ENCODE measurements at regions of chr1 and their contacts with region 1.

Region 1: DNA sequence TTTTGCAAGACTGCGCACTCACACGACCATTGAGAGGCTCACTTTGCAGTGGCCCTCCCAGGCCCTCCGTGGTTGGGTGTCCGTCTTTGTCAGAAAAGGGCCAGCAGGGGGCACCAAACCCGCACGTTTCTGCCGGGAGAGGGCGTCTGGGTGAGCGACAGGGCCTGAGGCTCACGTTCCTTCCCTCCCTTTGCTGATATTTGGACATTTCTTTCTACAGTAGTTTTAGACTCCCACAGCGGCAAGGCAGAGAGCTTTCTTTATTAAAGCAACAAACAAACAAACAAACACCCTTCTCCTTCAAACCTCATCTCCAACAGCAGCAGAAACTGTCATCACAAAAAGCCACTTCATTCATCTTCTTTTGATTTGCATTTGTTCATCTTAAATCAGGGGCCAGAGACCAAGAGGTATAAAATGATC is 79.2 kb upstream of the WDR26 start:
- H3K4me3 ChIP-seq: no peak overlapping the region
- H3K27ac ChIP-seq: no peak overlapping the region
- H3K4me1 ChIP-seq: 0 out of 2 replicates have a peak, but pooled peaks cover 3% of the 10 kb centered on the region
- CTCF ChIP-seq: peak; percentile 100

Region 2: DNA sequence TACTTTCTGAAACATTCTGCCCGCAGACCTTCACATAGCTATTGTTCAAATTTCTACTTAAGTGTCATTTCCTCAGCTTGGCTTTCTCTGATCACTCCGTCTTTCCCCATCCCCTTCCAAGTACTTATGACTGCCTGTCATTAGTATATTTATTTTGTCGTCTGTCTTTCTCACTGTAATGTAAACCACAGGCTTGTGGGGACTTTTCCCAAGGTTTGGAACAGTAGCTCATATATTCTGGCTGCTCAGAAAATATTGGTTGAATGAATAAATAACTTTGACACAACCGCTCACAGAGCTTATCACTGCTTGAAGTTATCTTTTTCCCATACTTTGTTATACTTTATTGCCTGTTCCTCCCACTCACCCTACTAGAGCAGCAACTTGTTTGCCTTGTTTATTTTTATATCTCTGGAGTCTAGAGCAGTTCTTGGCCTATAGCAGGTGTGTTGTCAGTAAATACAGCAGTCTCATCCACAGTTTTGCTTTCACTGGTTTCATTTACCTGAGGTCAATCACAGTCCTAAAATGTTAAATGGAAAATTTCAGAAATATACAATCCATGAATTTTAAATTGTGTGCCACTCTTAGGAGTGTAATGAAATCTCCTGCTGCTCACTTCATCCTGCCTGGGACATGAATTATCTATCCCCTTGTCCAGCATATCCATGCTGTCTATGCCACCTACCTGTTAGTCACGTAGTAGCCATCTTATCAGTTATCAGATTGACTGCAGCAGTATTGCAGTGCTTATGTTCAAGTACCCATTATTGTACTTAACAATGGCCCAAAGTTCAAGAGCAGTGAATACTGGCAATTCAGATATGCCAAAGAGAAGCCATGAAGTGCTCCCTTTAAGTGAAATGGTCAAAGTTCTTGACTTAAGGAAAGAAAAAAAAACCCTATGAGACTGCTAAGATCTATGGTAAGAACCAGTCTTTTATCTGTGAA is 159.5 kb before region 1 on chr1:
- CTCF ChIA-PET with region 1: no interaction called
- POLR2A ChIA-PET with region 1: no interaction called
- H3K4me3 ChIP-seq: no peak overlapping the region
- H3K27ac ChIP-seq: no peak overlapping the region
- H3K4me1 ChIP-seq: peaks cover 13% of the 10 kb centered on the region; the same call in 1 of the 2 replicates
- CTCF ChIP-seq: no peak

Region 3: DNA sequence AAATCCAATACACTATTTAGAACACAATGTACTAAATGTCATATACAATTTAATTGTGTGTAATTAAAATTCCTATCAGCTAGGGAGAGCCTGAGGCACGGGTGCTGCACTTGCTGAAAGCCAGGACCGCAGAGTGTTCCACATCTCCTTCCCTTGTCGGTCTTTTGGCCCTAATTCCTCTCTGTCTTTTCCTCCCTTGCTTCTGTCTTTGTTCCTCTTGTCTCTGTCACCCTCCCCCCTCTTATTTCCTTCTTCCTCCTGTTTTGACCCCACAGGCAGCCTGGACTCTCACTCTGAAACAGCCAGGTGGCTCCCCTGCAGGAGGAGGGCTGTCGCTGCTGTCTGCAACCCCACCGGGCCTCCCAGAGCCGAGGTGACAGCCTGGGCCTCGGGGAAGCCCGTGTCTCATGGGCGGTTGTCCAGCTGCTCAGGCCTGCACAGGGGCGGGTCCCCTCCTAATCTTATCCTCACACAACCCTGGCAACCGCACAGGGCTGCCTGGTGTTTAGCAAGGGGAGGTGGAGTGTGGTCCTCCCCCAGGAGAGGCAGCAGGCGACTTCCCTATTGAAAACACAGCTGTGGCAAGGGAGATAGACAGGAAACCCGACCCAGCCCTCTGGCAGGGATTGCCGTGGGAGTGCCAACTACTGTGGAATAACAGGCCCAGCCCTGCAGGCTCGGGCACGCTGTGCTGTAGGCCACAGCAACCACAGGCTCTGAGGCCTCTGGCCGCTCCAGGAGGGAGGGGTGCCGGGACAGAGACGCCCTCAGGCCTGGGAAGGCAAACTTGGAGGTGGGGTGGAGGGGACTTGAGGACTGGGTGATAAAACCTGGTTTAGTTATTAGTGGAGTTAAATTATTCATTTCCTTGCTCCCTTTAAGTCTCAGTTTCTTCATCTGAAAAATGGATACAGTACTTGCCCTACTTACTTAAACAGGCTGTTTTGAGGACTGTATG is 10.4 kb before region 1 on chr1:
- CTCF ChIA-PET with region 1: interaction called, 50 read pairs
- POLR2A ChIA-PET with region 1: interaction called, 3 read pairs
- H3K4me3 ChIP-seq: no peak overlapping the region; the same call in 1 of the 2 replicates
- H3K27ac ChIP-seq: peak overlapping the region; percentile 84
- H3K4me1 ChIP-seq: peaks cover 22% of the 10 kb centered on the region
- CTCF ChIP-seq: peak; percentile 95

Region 4: GRCh38 chr1:224607188-224608148 is 93.7 kb after region 1 on chr1:
- CTCF ChIA-PET with region 1: interaction called, 14 read pairs
- POLR2A ChIA-PET with region 1: no interaction called
- H3K4me3 ChIP-seq: no peak overlapping the region
- H3K27ac ChIP-seq: no peak overlapping the region
- H3K4me1 ChIP-seq: no peaks in the 10 kb centered on the region
- CTCF ChIP-seq: no peak

Region 5: DNA sequence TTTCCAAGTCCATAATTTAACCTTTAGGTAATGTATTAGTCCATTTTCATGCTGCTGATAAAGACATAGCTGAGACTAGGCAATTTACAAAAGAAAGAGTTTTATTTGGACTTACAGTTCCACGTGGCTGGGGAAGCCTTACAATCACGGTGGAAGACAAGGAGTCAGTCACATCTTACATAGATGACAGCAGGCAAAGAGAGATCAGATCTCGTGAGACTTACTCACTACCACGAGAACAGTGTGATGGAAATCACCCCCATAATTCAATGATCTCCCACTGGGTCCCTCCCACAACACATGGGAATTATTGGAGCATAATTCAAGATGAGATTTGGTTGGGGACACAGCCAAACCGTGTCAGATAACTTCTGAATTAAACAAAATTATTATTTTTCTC is 146.3 kb after region 1 on chr1:
- CTCF ChIA-PET with region 1: interaction called, 10 read pairs
- POLR2A ChIA-PET with region 1: no interaction called
- H3K4me3 ChIP-seq: no peak overlapping the region
- H3K27ac ChIP-seq: no peak overlapping the region
- H3K4me1 ChIP-seq: no peaks in the 10 kb centered on the region
- CTCF ChIP-seq: no peak

Region 6: DNA sequence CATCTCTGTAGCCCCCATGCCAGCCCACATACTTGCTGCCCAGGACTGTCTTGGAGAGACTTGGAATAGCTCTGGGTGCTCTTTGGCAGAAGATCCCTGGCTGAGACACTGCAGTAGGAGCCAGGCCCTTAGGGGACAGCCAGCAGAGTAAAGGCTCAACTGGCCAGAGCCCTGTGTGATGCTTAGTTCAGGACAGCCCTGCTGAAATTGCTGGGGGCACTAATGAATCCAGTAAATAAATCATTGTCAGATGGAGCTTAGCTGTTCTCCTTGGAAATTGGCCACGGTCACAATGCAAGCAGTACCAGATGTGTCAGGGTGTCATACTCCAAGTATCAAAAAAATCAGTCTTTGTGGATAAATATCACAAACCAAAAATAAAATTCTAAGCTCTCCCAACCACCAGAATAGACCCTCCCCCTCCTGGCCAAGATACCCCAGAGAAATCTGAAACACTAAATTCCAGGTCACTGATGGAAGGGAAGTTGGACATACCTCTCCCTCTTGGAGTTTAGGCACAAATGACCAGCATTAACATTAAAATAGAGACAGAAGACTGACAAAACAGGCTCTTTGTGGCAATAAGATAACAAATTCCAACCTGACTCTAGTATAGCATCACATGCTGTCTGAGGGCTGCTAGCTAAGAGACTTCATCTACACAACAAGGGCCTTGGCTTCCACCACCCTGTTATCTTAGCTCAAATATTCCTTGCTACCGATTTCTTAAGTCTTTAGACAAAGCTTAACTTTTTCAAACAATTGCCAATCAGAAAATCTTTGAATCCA is 332.5 kb after region 1 on chr1:
- CTCF ChIA-PET with region 1: interaction called, 273 read pairs
- POLR2A ChIA-PET with region 1: no interaction called
- H3K4me3 ChIP-seq: no peak overlapping the region
- H3K27ac ChIP-seq: no peak overlapping the region
- H3K4me1 ChIP-seq: no peaks in the 10 kb centered on the region
- CTCF ChIP-seq: no peak

Region 7: DNA sequence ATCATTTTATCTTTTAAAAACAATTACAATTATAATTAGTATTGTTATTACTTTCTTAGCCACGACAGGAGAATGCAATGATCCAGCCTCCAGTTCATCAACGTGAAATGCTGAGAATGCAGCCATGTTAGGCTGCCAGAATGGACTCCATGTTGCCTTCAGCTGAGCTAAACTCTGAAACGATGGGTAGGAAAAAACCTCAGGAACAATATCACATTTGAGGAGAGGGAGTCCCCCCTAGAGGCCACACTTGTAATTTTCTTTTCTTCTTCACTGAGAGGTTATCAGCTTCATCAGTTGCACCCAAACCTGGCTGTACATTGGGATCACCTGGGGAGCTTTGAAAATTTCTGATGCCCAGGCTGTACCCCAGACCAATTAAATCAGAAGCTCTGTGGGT is 381.1 kb after region 1 on chr1:
- CTCF ChIA-PET with region 1: interaction called, 84 read pairs
- POLR2A ChIA-PET with region 1: no interaction called
- H3K4me3 ChIP-seq: no peak overlapping the region
- H3K27ac ChIP-seq: no peak overlapping the region
- H3K4me1 ChIP-seq: no peaks in the 10 kb centered on the region
- CTCF ChIP-seq: peak; percentile 38; the same call in 1 of the 2 replicates

Measured in HEK293 (cell line).